SK-N-SH (cell line): ENCODE measurements at regions of chr12 and their contacts with region 1.

Region 1: GRCh38 chr12:117167769-117168168 is 22.5 kb downstream of the FBXO21 start:
- DNase-seq: no peak
- H3K4me3 ChIP-seq: no peak overlapping the region
- H3K27ac ChIP-seq: no peak overlapping the region
- H3K4me1 ChIP-seq: no peaks in the 10 kb centered on the region
- H3K27me3 ChIP-seq: no peaks in the 10 kb centered on the region
- CTCF ChIP-seq: no peak
- EP300 ChIP-seq: no peak
- RAD21 ChIP-seq: no peak

Region 2: DNA sequence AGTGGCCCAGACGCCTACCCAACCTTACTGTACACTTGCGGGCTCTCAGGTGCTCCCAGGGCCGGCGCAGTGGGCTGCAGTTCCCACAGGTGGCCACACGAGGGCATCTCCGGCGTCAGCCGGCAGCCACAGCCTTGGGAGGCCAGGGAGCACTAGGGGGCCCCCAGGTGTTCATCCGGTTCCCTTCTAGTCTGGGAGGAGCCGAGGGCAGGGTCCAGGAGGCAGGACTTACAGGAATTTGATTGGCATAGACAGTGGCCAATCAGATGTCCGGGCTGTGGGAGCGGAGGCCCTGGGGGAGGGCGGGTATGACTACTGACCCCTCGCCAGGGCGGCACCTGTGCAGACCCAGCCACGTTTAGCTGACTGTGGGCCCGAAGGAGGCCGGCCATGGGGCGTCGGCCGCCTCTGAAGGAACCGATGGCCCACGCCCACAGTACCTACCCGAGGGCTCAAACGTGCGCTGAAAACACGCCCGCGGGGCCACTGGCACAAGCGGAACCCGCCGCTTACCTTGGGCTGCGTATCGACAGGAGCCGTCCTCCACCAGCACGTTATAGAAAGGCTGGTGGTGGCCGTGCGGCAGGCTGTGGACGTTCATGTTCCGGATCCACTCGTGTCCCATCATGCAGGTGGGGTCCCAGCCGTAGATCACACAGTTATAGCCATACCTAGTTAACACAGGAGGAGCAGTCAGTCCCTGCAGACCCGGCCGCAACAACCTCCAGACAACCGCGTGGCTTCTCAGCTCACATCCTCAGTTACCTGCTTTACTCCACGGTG is 12.3 kb before region 1 on chr12:
- CTCF ChIA-PET with region 1: interaction called, 12 read pairs
- POLR2A ChIA-PET with region 1: no interaction called
- DNase-seq: peak; percentile 85
- H3K4me3 ChIP-seq: no peak overlapping the region; a peak in 1 of 4 replicates
- H3K27ac ChIP-seq: no peak overlapping the region
- H3K4me1 ChIP-seq: peaks cover 0 to 4% of the 10 kb centered on the region in 2 experiments; a peak in 1 of 4 replicates
- H3K27me3 ChIP-seq: no peaks in the 10 kb centered on the region
- CTCF ChIP-seq: peak; percentile 66
- EP300 ChIP-seq: no peak
- RAD21 ChIP-seq: peak; percentile 30; the same call in 1 of the 2 replicates

Region 3: DNA sequence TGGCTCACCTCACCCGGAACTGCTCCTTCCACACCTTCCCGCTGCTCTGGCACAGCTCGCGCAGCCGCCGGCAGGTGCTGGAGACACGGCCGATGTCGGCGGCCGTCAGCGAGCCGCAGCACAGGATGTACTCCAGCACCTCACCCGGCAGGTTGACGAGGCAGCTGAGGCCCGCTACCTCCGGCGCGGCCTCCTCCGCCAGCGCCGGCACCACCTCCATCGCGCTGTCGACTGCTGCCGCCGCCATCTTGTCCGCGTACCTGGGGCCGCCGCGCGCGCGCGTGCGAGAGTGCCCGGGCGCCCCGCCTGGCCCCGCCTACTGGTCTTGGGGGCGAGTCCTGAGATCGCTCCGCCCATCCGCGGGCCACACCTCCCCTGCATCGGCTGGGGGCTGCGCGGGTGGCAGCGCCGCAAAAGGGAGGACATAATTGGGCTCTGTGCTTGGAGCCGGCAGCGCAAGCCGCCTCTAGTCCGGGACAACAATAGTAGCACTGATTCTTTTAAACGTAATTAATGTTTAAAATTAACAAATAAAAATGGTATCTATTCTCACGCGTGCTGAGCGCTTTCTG is 22.5 kb after region 1 on chr12 and contains the start of gene FBXO21:
- CTCF ChIA-PET with region 1: no interaction called
- POLR2A ChIA-PET with region 1: no interaction called
- DNase-seq: peak; percentile 99
- H3K4me3 ChIP-seq: peak within 1 kb of the TSS; percentile 70 to 78
- H3K27ac ChIP-seq: peak within 1 kb of the TSS in 1 of 2 experiments; percentile 61; a peak in 1 of 4 replicates
- H3K4me1 ChIP-seq: peaks cover 4 to 10% of the 10 kb centered on the region in 2 experiments; a peak in 3 of 4 replicates
- H3K27me3 ChIP-seq: no peaks in the 10 kb centered on the region
- CTCF ChIP-seq: no peak
- EP300 ChIP-seq: no peak
- RAD21 ChIP-seq: no peak
- polyA plus RNA-seq, gene FBXO21: 44.2 and 51.1 TPM in 2 replicates

Region 4: DNA sequence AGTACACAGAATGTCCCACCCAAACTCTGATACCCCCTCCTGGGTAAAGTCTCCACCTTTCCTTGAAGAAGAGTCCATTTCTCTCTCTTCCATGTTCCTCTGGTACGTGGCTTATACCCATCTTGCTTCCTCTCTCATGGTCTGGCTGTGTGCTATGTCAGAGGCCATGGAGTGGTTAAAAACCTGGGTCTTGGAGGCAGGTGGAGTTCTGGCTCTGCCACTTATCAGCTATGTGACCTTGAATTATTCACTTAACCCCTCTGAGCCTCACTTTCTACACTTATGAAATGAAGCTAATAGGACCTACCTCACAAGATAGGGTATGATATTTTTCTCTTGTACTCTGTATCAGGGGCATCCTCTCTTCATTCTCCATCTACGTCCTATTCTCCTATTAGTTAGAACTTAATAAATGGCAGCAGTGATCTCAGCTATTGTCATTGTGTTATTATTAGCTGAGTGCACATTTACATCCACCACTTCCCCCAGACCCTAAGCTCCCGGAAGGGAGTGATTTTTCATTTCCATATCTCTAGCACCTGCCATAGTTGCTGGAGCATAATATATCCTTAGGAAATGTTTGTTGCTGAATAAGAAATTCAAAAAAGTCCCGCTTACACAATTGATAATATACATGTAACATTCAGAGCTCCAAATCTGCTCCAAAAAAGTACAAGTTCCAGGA is 253.4 kb after region 1 on chr12:
- CTCF ChIA-PET with region 1: no interaction called
- POLR2A ChIA-PET with region 1: no interaction called
- DNase-seq: no peak
- H3K4me3 ChIP-seq: no peak overlapping the region
- H3K27ac ChIP-seq: no peak overlapping the region
- H3K4me1 ChIP-seq: peaks cover 0 to 10% of the 10 kb centered on the region in 2 experiments; a peak in 1 of 4 replicates
- H3K27me3 ChIP-seq: no peaks in the 10 kb centered on the region
- CTCF ChIP-seq: no peak
- EP300 ChIP-seq: no peak
- RAD21 ChIP-seq: no peak